ENCODE measurements at regions of chr11 and their contacts with region 1.

Region 1: GRCh38 chr11:78465169-78465942 is 47.7 kb upstream of the GAB2 start:
- DNase-seq: peak; percentile 88
- H3K4me3 Mint-ChIP-seq: peak overlapping the region; percentile 59
- H3K27ac Mint-ChIP-seq: peak overlapping the region; percentile 80
- H3K4me1 Mint-ChIP-seq: peaks cover 40% of the 10 kb centered on the region
- H3K27me3 Mint-ChIP-seq: no peaks in the 10 kb centered on the region

Region 2: GRCh38 chr11:78228467-78228866 is 236.9 kb before region 1 on chr11:
- intact Hi-C with region 1: loop called (anchors 1 kb)
- DNase-seq: peak; percentile 83
- H3K4me3 Mint-ChIP-seq: no peak overlapping the region
- H3K27ac Mint-ChIP-seq: peak overlapping the region; percentile 31
- H3K4me1 Mint-ChIP-seq: peaks cover 59% of the 10 kb centered on the region
- H3K27me3 Mint-ChIP-seq: no peaks in the 10 kb centered on the region

Region 3: GRCh38 chr11:78424334-78425270 is 40.8 kb before region 1 on chr11:
- intact Hi-C with region 1: loop called (anchors 2 kb)
- DNase-seq: peak; percentile 69
- H3K4me3 Mint-ChIP-seq: peak overlapping the region; percentile 50
- H3K27ac Mint-ChIP-seq: peak overlapping the region; percentile 31
- H3K4me1 Mint-ChIP-seq: peaks cover 57% of the 10 kb centered on the region
- H3K27me3 Mint-ChIP-seq: no peaks in the 10 kb centered on the region

Region 4: DNA sequence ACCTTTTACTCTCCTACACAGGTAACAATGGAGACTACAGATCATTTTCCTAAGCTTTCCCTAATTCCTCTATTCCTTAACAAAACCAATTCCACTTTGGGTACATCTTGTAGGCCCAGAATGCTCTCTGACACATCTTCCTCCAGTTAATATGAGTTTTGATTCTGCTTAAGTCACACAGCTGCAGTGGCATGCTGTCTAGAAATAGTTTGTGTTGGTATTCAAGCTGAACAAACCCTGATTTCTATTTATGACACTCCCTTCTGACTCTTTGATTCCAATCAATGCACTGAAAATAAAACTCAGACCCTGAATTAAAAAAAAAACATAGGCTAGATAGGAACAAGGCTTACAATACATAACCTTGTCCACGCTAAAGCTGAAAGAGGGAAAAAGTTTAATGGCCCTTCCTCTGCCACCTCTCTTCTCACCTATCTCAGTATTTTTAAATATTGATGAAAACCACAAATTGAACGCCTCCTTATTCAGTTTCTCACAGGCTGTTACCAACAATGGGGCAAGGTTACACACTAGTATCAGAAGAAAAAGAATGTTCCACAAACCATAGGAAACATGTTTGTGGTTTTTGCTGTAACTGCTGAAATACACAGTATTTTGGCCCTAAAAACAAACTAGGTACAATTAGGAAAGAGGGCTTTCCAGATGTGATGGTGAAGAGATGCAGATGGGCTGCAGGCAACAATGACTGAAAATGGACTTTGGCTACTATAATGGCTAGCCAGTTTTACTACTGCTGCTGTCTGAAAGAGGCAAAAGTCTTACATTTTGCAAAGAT is 12.0 kb before region 1 on chr11:
- intact Hi-C with region 1: loop called (anchors 1 kb)
- DNase-seq: peak; percentile 62
- H3K4me3 Mint-ChIP-seq: peak overlapping the region; percentile 32
- H3K27ac Mint-ChIP-seq: peak overlapping the region; percentile 73
- H3K4me1 Mint-ChIP-seq: peaks cover 23% of the 10 kb centered on the region
- H3K27me3 Mint-ChIP-seq: no peaks in the 10 kb centered on the region

Region 5: DNA sequence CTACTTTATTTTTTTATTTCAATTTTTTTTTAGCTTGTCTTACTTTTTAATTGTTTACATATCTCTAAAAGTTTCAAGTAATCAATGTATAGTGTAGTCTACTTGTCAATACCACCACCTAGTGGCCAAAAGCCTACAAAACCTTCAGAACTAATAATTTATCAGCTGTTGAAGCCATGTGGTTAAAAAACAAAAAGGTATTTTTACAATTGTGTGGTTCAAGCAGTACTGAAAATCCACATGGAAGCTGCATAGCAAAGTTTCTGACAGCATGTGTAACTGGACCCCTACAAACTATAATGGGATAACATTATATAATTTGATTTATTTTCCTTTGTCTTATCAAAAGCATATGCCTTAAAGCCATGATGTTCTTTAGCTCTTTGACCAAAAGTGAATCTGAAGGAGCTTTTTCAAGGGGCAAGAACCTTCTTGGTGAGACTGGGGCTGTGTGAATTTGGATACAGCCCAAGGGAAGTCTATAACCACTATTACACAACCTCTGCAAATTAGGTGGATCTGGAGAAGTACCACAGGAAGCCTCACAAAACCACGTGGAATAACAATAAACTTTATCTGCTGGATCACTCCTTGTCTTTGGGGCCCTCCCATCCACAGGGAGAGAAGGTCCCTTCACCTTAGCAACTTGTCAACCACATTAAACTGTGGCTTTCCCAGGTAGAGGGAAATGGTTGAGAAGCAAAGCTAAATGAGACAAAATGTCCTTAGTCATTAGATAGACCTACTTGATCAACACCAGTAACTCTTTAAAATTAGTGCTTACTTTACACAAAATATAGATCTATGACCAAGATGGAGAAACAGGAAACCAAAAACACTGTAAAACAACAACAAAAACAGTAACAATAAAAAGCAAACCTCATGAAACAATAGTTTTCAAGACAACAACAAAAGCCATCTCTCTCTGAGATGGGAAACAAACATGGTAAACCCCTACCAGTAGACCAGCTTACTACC is 99.4 kb after region 1 on chr11:
- intact Hi-C with region 1: loop called (anchors 2 kb)
- DNase-seq: peak; percentile 89
- H3K4me3 Mint-ChIP-seq: no peak overlapping the region
- H3K27ac Mint-ChIP-seq: peak overlapping the region; percentile 5
- H3K4me1 Mint-ChIP-seq: peaks cover 42% of the 10 kb centered on the region
- H3K27me3 Mint-ChIP-seq: no peaks in the 10 kb centered on the region

Measured in activated CD4-positive, alpha-beta T cell treated with anti-CD3 and anti-CD28 coated beads, Interleukin-2, amount 10 ng/mL, durations not matched to agents 24 days and 14 days (primary cell).